Activated CD4-positive, alpha-beta memory T cell treated with anti-CD3 and anti-CD28 coated beads for 36 hours (primary cell): ENCODE measurements at regions of chr11 and their contacts with region 1.

Region 1: GRCh38 chr11:93529707-93530467 is 13.3 kb downstream of the SMCO4 start:
- DNase-seq: no peak
- H3K4me3 Mint-ChIP-seq: no peak overlapping the region
- H3K27ac Mint-ChIP-seq: peak overlapping the region; percentile 52
- H3K4me1 Mint-ChIP-seq: peaks cover 72% of the 10 kb centered on the region
- H3K27me3 Mint-ChIP-seq: no peaks in the 10 kb centered on the region

Region 2: GRCh38 chr11:93468290-93468689 is 61.6 kb before region 1 on chr11:
- CTCF ChIA-PET with region 1: no interaction called
- POLR2A ChIA-PET with region 1: no interaction called
- intact Hi-C with region 1: no loop called
- DNase-seq: no peak
- H3K4me3 Mint-ChIP-seq: no peak overlapping the region
- H3K27ac Mint-ChIP-seq: no peak overlapping the region
- H3K4me1 Mint-ChIP-seq: no peaks in the 10 kb centered on the region
- H3K27me3 Mint-ChIP-seq: no peaks in the 10 kb centered on the region

Region 3: DNA sequence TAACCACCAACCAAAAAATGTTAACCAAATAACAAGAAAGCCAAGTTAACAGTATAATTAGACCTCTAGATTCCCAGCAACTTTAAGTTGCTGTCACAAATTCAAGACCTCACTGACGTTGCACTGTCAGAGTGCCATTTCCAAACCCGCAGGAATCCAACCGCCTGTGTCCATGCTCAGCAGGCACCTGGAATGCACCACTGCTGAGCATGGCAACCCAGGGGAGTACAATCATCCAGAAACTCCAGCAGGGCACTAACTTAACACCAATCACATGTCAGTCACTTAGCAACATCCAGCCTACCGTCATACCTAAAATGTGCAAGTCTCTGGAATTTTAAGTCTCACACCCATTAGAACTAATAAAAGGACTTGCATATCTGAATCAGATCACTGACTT is 35.5 kb before region 1 on chr11:
- CTCF ChIA-PET with region 1: no interaction called
- POLR2A ChIA-PET with region 1: no interaction called
- intact Hi-C with region 1: loop called (anchors 5 kb)
- DNase-seq: no peak
- H3K4me3 Mint-ChIP-seq: no peak overlapping the region
- H3K27ac Mint-ChIP-seq: no peak overlapping the region
- H3K4me1 Mint-ChIP-seq: peaks cover 6% of the 10 kb centered on the region
- H3K27me3 Mint-ChIP-seq: no peaks in the 10 kb centered on the region

Region 4: DNA sequence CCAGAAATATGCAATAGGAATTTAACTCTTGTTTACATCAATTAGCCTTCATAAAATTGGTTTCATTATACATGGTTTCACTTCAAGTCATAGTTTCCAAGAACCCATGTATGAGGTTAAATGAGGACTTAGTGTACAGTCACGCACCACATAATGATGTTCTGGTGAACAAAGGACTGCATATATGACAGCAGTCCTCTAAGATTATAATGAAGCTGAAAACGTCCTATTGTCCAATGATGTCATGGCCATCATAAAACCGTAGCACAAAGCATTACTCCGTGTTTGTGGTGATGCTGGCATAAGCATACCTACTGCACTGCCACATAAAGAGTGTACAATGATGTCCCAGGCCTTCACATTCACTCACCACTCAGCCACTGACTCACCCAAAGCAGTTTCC is 17.8 kb before region 1 on chr11:
- CTCF ChIA-PET with region 1: no interaction called
- POLR2A ChIA-PET with region 1: interaction called, 3 read pairs
- intact Hi-C with region 1: loop called (anchors 1 kb)
- DNase-seq: peak; percentile 50
- H3K4me3 Mint-ChIP-seq: no peak overlapping the region
- H3K27ac Mint-ChIP-seq: peak overlapping the region; percentile 62
- H3K4me1 Mint-ChIP-seq: peaks cover 13% of the 10 kb centered on the region
- H3K27me3 Mint-ChIP-seq: no peaks in the 10 kb centered on the region

Region 5: GRCh38 chr11:93591247-93591898 is 61.5 kb after region 1 on chr11:
- CTCF ChIA-PET with region 1: no interaction called
- POLR2A ChIA-PET with region 1: no interaction called
- intact Hi-C with region 1: no loop called
- DNase-seq: no peak
- H3K4me3 Mint-ChIP-seq: no peak overlapping the region
- H3K27ac Mint-ChIP-seq: no peak overlapping the region
- H3K4me1 Mint-ChIP-seq: peaks cover 4% of the 10 kb centered on the region
- H3K27me3 Mint-ChIP-seq: peaks cover 3% of the 10 kb centered on the region